Testis (tissue), 5 donors: ENCODE measurements at regions of chr5 and their contacts with region 1.

Region 1: DNA sequence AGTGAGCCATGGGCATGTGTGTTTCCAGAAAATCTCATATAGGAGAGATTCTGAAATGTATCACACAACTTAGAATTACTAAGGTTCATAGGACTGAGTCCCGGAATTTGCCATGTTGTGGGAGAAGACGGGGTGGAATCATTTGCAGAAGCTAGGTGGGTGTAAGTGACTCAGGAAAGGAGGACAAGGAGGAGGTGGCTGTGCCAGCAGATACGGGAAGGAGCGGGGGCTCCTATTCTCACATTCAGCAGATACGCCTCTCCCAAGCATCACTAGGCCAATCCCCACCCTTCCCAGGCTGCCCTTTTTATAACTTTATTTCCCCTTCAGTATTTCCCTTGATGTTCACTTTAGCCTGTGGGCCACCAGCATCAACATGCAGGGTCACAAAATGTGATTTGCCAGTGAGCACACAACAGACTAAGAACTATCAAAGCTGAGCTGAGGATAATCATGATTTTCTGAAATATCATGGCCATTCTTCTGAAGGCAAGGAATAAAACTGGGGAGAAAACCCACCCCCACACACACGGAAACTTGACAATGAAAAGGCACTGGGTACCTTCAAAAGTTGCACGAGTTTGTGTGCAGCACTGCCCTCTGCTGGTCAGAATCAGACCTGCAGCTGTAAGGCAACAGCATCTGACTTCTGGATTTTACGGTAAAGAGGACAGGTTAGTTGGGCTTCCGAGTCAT is 133.2 kb downstream of the MTX3 start:
- DNase-seq: peak; percentile 90
- H3K4me3 ChIP-seq: no peak overlapping the region
- H3K27ac ChIP-seq: no peak overlapping the region
- H3K4me1 ChIP-seq: no peaks in the 10 kb centered on the region
- H3K27me3 ChIP-seq: no peaks in the 10 kb centered on the region
- CTCF ChIP-seq: peak; percentile 86 to 96 (median 91)
- POLR2A ChIP-seq: no peak

Region 2: DNA sequence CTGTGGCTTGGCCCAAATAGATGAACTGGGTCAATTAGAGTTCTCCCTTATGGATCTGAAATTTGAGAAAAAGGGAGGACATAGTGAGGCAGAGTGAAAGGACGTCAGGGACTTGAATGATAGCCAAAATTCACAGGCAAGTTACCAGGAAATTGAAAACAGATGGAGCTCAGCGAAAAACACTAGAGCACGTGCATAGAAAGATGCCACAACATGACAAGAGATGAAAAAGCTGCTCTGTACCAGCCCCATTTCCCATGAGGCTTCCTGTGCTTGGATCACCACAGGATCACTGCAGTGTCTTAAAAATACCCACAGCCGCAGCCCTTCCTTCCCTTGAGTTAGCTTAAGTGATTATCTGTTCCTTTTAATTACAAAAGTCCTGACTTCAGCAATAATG is 304.9 kb before region 1 on chr5:
- intact Hi-C with region 1: loop called (anchors 5 kb)
- DNase-seq: no peak
- H3K4me3 ChIP-seq: no peak overlapping the region
- H3K27ac ChIP-seq: no peak overlapping the region
- H3K4me1 ChIP-seq: no peaks in the 10 kb centered on the region
- H3K27me3 ChIP-seq: no peaks in the 10 kb centered on the region
- CTCF ChIP-seq: no peak
- POLR2A ChIP-seq: no peak

Region 3: GRCh38 chr5:79886925-79887655 is 29.2 kb after region 1 on chr5:
- intact Hi-C with region 1: no loop called
- DNase-seq: no peak
- H3K4me3 ChIP-seq: no peak overlapping the region
- H3K27ac ChIP-seq: no peak overlapping the region
- H3K4me1 ChIP-seq: no peaks in the 10 kb centered on the region
- H3K27me3 ChIP-seq: no peaks in the 10 kb centered on the region
- CTCF ChIP-seq: no peak
- POLR2A ChIP-seq: no peak

Region 4: DNA sequence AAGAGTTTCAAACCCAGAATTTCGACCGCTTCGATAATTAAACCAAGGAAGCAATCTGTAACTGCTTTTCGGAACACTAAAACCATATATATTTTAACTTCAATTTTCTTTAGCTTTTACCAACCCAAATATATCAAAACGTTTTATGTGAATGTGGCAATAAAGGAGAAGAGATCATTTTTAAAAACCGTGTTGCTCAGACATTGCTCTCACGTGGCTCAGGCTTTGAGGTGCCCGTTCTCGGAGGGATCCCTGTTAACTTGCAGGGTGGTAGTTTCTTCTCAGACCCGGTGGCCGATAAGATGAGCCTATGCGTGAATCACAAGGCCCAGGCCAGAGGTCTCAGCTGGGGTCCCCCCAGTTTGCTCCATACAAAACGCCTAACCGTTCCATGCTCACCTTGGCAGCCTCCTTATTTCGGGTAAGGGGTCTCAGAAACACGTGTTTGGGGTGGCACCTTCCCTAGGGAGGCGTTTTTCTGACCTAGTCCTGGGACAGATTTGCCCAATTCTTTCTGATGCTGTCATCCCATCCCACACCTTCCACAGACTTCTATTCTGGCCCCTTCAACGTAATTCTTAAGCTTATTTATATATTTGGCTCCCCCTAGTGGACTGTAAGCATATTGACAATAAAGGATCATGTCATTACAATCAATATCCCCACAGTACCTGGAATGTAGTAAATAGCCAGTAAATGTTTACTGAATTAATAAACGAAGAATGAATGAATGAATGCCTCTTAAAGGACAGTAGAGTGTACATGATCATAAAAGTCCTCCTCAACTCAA is 225.4 kb after region 1 on chr5:
- intact Hi-C with region 1: loop called (anchors 5 kb)
- DNase-seq: peak; percentile 38
- H3K4me3 ChIP-seq: peak overlapping the region; percentile 14 to 22
- H3K27ac ChIP-seq: peak overlapping the region; percentile 23 to 76
- H3K4me1 ChIP-seq: no peaks in the 10 kb centered on the region
- H3K27me3 ChIP-seq: no peaks in the 10 kb centered on the region
- CTCF ChIP-seq: peak; percentile 74 to 89 (median 83)
- POLR2A ChIP-seq: no peak